ENCODE measurements at regions of chr3 and their contacts with region 1.

Region 1: GRCh38 chr3:184983-185382 is 11.6 kb upstream of the CHL1 start:
- DNase-seq: no peak
- ATAC-seq: no peak
- H3K4me3 ChIP-seq: no peak overlapping the region
- H3K4me3 Mint-ChIP-seq: no peak overlapping the region
- H3K27ac ChIP-seq: no peak overlapping the region
- H3K27ac Mint-ChIP-seq: no peak overlapping the region
- H3K4me1 ChIP-seq: no peaks in the 10 kb centered on the region
- H3K4me1 Mint-ChIP-seq: no peaks in the 10 kb centered on the region
- H3K27me3 ChIP-seq: no peaks in the 10 kb centered on the region
- H3K27me3 Mint-ChIP-seq: peaks cover 0 to 4% of the 10 kb centered on the region in 2 donors

Region 2: DNA sequence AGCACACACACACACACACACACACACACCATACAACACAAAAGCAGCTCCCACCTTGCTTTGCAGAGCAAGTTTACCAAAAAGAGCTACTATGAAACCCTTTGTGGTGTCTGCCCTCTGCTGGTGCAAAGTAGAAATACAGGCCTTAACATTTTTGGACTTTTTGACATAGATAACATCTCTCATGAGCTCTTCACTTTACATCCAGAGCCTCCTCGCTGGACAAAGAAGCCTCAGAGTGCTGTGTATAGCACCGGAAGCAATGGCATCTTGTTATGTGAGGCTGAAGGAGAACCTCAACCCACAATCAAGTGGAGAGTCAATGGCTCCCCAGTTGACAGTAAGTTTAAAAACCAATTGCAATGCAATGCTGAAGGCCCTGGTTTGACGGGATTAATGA is 169.4 kb after region 1 on chr3:
- CTCF ChIA-PET with region 1: interaction called in 1 of 2 experiments, 10 read pairs
- POLR2A ChIA-PET with region 1: no interaction called
- DNase-seq: peak in 2 of 35 experiments; percentile 3 to 19
- ATAC-seq: no peak
- H3K4me3 ChIP-seq: no peak overlapping the region
- H3K4me3 Mint-ChIP-seq: no peak overlapping the region
- H3K27ac ChIP-seq: no peak overlapping the region
- H3K27ac Mint-ChIP-seq: no peak overlapping the region
- H3K4me1 ChIP-seq: no peaks in the 10 kb centered on the region
- H3K4me1 Mint-ChIP-seq: no peaks in the 10 kb centered on the region
- H3K27me3 ChIP-seq: no peaks in the 10 kb centered on the region
- H3K27me3 Mint-ChIP-seq: no peaks in the 10 kb centered on the region

Measured in T-cell (primary cell).